ENCODE measurements at regions of chr16 and their contacts with region 1.

Region 1: DNA sequence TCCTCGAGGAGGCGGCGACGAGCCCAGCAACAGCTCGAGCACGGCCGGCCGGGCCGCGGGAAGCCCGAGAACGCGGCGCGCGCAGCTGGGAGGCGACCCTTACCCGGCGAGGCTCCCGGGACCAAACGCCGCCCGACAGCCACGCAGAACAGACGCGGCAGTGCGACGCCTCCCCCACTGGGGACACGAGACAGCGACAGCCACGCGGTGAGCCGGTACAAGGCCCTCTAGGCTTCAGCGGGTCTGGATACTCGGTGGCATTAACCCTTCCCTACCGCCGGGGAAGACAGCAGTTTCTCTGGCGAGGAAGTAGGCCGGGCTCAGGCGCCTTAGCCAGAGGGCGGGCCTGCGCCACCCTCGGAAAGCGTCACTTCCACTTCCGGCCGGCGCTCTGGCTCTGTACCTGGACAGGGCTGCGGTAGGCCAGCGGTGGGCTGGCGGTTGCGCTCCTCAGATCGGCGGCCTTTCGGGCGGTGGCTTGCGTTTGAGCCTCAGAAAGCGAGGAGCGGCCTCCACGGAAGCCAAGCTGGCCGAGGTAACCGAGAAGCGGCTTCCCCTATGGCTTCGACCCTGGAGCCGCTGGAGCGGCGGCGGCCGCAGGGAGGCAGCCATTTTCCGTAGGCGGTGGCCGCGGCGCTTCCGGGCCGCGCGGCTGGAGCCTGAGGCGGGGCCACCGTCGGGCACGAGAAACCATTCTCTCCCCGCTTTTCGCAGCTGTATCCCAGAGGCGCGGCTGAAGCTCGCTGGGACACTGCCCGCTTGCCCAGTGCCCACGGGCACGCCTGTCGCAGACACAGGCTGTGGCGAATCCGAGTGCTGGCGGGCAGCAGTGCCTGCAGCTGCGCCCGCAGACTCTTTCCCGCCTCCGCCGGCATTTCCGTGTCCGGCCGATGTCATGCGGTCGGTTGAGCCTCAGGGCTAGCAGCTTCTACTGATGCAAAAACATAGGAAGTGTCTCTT is at the starts of genes TIGD7 and ZNF75A:
- DNase-seq: peak; percentile 67 to 93 (median 84)
- ATAC-seq: peak; percentile 93 to 96
- H3K4me3 Mint-ChIP-seq: peak within 1 kb of the TSS; percentile 75 to 90 (median 84)
- H3K27ac Mint-ChIP-seq: peak within 1 kb of the TSS; percentile 37 to 94 (median 84)
- H3K4me1 Mint-ChIP-seq: peaks cover 9 to 31% (median 20%) of the 10 kb centered on the region in 4 donors
- H3K27me3 Mint-ChIP-seq: no peaks in the 10 kb centered on the region
- polyA plus RNA-seq, gene TIGD7: 5.8 to 7.0 (median 5.8) TPM
- polyA plus RNA-seq, gene ZNF75A: 18.2 to 32.3 (median 23.6) TPM

Region 2: DNA sequence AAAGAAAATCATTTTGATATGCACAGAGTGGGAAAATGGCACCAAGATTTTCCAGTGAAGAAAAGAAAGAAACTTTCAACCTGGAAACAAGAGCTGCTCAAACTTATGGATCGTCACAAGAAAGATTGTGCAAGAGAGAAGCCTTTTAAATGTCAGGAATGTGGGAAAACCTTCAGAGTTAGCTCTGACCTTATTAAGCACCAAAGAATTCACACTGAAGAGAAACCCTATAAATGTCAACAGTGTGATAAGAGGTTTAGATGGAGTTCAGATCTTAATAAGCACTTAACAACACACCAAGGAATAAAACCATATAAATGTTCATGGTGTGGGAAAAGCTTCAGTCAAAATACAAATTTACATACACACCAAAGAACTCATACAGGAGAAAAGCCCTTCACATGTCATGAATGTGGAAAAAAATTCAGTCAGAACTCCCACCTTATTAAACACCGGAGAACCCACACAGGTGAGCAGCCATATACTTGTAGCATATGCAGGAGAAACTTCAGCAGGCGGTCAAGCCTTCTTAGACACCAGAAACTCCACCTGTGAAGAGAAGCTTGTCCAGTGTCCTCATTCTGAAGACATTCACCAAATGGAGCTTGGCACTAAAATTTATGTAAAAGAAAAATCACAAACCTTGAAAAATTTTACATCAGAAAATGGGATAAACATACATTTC is 12.1 kb after region 1 on chr16:
- POLR2A ChIA-PET with region 1: interaction called, 17 read pairs
- DNase-seq: no peak
- ATAC-seq: no peak
- H3K4me3 Mint-ChIP-seq: peak overlapping the region in 1 of 10 donors; percentile 14
- H3K27ac Mint-ChIP-seq: peak overlapping the region in 1 of 10 donors; percentile 31
- H3K4me1 Mint-ChIP-seq: peaks cover 0 to 3% (median 1%) of the 10 kb centered on the region in 4 donors
- H3K27me3 Mint-ChIP-seq: no peaks in the 10 kb centered on the region

Region 3: DNA sequence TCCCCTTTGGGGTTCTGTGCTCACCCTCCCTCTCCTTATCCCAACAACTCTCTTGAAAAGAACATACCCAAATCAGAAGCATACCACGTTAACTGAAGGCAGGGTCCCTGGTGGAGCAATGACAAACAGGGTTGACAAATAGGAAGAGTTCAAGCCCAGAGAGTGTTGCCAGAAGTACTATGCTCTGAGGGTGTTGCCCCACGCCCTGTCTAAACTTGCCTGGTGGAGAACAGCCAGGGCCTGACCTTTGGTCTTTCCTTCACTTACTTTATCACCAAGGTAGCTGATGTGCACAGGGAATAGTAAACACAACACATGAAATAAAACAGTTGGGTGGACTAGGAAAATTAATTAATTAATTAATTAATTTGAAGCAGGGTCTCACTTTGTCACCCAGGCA is 23.3 kb after region 1 on chr16:
- POLR2A ChIA-PET with region 1: no interaction called
- DNase-seq: no peak
- ATAC-seq: no peak
- H3K4me3 Mint-ChIP-seq: no peak overlapping the region
- H3K27ac Mint-ChIP-seq: no peak overlapping the region
- H3K4me1 Mint-ChIP-seq: no peaks in the 10 kb centered on the region
- H3K27me3 Mint-ChIP-seq: no peaks in the 10 kb centered on the region

Region 4: DNA sequence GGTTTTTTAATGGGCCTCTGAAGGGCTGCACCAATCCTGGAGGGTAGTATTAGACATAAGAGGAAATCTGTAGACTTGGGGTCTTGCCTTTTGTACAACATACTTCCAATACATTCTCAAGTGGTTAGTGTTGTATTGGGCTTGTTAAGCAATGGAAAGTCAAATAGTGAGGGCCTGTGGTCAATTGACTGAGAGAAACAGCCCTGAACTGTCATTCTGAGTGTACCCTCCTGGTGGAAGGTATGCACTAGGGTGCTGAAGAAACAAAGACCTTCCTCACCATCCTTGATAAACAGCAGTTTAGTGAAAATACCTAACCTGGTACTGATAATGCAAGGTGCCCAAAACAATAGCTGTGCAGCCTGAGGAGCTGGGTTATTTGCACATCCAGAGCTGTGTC is 72.5 kb after region 1 on chr16:
- POLR2A ChIA-PET with region 1: no interaction called
- DNase-seq: no peak
- ATAC-seq: no peak
- H3K4me3 Mint-ChIP-seq: no peak overlapping the region
- H3K27ac Mint-ChIP-seq: no peak overlapping the region
- H3K4me1 Mint-ChIP-seq: peaks cover 0 to 4% (median 1%) of the 10 kb centered on the region in 4 donors
- H3K27me3 Mint-ChIP-seq: no peaks in the 10 kb centered on the region